ENCODE measurements at regions of chr16 and their contacts with region 1.

Region 1: GRCh38 chr16:46555951-46556350 is 65.2 kb downstream of the SHCBP1 start:
- DNase-seq: no peak
- ATAC-seq: no peak
- H3K4me3 Mint-ChIP-seq: no peak overlapping the region
- H3K27ac Mint-ChIP-seq: no peak overlapping the region
- H3K4me1 Mint-ChIP-seq: no peaks in the 10 kb centered on the region
- H3K27me3 Mint-ChIP-seq: peaks cover 13% of the 10 kb centered on the region

Region 2: DNA sequence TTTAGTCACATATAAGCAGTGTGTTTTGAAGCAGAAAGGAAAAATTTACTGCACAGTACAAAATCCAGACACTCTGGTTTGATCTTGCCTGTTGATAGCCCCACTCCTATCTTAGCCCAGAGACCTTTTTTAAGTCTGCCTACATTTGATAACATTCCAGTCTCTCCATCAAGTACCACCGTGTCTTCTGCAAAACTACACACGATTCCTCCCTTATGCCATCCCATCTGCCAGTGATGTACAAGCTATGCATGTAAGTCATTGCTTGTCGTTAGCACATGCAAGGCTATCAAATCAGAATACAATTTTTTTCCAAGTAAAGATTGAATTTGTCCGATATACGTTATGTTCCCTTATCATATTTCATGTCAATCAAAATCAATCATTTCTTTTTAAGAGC is 50.3 kb after region 1 on chr16:
- CTCF ChIA-PET with region 1: interaction called, 11 read pairs
- DNase-seq: no peak
- ATAC-seq: no peak
- H3K4me3 Mint-ChIP-seq: no peak overlapping the region
- H3K27ac Mint-ChIP-seq: no peak overlapping the region
- H3K4me1 Mint-ChIP-seq: no peaks in the 10 kb centered on the region
- H3K27me3 Mint-ChIP-seq: no peaks in the 10 kb centered on the region

Measured in activated CD8-positive, alpha-beta memory T cell treated with anti-CD3 and anti-CD28 coated beads, Interleukin-2, amount 10 ng/mL, durations not matched to agents 7 days and 5 days (primary cell).